ENCODE measurements at regions of chr22 and their contacts with region 1.

Region 1: DNA sequence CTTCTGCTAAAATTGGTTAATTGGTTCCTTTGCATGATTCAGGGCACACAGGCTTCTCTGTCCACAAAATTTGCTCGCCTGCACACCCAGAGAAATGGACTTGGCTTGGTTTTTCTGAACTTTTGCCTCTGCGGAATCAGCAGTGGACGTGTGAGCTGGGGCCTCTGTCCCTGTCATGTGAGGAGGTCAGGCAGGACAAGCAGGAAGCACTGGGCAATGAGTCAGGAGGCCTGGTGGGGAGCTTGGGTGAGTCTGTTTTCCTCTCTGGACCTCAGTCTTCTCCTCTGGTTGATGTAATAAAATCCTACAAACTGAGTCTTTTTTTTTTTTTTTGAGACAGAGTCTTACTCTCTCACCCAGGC is 10.4 kb upstream of the CELSR1 start:
- DNase-seq: peak; percentile 32
- ATAC-seq: peak; percentile 77
- H3K4me3 ChIP-seq: no peak overlapping the region
- H3K27ac ChIP-seq: no peak overlapping the region
- H3K4me1 ChIP-seq: peaks cover 25% of the 10 kb centered on the region; the same call in 1 of the 2 replicates
- H3K27me3 ChIP-seq: no peaks in the 10 kb centered on the region
- CTCF ChIP-seq: no peak

Region 2: DNA sequence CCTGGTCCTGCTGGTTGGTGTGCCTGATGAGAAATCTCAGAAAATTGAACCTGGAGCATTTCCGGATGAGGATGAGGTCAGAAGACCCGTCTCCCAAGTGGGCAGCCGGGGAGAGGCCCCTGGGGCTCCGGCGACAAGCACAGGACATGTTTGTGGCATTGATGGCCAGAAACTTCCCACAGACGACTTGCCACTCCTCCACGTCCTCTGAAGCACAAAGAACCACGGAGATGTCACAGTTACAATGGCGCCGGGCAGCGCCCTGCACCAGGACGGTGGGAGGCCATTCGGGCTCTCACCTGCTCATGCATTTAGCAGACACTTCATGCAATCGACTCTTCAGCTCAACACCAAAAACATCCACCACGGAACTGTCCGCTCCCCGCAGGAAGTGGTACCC is 143.7 kb after region 1 on chr22:
- CTCF ChIA-PET with region 1: interaction called, 12 read pairs
- POLR2A ChIA-PET with region 1: no interaction called
- intact Hi-C with region 1: no loop called
- DNase-seq: no peak
- ATAC-seq: no peak
- H3K4me3 ChIP-seq: no peak overlapping the region
- H3K27ac ChIP-seq: no peak overlapping the region
- H3K4me1 ChIP-seq: no peaks in the 10 kb centered on the region
- H3K27me3 ChIP-seq: no peaks in the 10 kb centered on the region
- CTCF ChIP-seq: no peak